ENCODE measurements at regions of chr5 and their contacts with region 1.

Region 1: DNA sequence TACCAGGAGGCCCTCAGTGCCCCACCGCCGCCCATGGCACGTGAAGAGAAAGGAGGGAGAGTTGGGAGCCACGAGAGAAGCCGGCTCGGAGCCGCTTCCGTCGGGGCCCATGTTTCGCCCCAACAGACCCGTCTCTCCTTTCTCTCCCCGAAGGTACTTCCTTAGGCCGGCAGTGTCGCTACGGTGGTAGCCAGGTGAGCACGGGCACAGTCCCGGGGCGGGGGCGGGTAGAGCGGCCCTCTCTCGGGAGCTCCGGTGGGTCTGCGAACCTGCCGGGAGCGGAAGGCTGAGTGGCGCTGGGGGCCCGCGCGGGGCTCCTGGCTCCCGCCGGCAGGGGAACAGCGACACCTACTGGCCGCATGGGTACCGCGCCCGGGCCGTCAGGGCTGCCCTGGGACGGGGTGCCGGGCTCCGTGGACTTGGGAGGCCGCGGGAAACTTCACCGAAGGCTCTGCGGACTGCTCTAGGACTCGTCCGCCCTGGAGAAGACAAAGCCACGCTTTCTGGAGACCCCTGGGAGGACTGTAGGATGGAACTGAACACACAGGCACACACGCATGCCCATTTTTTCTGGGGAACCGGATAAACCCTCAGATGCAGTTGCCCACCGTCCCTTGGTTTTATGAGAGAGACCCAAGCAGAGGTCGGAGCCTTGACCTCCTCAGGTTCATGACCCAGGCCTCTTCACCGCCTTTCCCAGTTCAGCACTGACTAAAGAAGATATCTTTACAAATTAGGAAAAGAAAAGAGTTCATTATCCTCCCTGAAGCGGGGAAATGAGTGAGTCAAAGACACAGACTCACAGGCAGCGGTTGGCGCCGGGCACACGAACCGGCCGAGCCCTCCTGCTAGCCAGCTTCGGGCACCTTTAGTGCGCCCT is 202.5 kb downstream of the MEF2C start:
- H3K4me3 Mint-ChIP-seq: peak overlapping the region; percentile 67
- H3K27ac Mint-ChIP-seq: no peak overlapping the region
- H3K4me1 Mint-ChIP-seq: peaks cover 52% of the 10 kb centered on the region
- H3K27me3 Mint-ChIP-seq: peaks cover 88% of the 10 kb centered on the region

Region 2: DNA sequence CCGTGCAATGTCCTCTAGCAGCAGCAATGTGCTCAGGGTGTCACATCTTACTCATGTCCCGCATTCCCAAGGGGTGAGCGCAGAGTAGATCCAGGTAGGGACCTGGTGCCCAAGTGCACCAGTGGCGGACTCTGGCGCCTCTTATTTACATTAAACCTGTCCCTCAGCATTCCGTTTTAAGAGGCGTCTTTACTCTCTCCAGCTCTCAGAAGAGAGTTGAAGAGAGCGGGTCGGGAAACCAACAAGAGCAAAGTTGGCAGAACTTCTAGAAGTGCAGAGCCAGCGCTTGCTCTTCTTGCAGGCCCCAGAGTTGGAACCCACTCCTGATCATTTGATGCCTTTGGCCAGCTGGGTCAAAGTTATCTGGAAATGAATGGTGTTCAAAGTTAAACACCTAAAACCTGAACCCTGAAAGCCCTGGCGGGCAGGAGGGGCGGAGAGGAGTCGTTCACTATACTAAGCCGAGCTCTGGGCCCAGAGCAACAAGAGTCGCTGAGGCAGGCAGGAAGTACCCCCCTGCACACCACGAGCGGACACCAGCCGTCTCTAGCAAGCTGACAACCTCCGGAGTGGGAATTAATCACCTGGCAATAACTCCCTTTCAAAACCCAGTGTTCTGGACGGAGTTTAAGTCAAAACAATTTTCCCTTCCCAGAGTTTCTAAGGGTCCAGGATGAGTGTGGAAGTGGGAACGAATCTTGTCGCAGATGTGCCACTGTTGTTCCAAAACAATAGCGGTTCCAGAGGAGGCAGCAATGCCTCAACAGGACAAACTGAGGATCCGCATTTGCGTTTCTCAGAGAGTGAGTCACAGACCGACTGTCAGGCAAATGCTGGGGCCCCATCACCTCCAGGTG is 534.7 kb before region 1 on chr5:
- intact Hi-C with region 1: loop called (anchors 5 kb)
- H3K4me3 Mint-ChIP-seq: no peak overlapping the region
- H3K27ac Mint-ChIP-seq: no peak overlapping the region
- H3K4me1 Mint-ChIP-seq: no peaks in the 10 kb centered on the region
- H3K27me3 Mint-ChIP-seq: peaks cover 25% of the 10 kb centered on the region

Region 3: DNA sequence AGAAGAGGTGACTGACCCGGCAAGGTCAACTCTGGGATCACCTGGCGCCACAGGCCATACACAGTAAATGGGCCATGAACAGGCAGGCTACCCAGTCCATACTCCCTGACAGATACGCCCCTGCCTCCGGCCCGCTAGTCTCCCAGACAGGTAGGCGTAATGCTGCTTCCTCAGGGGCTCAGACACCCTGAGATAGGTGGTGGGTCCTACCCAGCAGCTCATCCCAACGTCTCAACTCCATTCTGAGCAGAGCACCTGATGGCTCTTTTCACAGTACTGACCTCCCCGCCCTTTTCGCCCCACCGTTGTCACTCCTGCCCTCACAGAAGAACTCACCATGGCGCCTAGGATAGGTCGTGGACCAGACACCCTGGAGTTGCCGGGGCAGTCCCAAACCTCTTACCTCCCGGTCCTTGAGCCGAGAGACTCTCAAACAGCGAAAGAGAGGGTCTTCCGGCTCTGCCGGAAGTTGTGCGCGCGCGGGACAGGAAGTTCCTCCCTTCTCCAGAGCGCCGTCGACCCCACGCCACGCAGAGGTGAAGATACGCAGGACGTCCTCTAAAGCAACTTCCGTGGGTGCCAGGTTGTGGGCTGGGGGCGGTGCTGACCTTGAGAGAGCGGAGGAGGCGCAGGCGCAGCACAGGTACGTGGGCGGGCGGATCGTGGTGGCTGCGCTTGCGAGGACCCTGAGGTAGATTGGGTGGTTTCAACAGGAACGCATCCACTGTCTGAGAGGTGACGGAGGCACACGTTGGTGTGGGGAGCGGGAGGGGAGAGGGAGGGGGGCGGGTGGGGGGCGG is 411.9 kb before region 1 on chr5 and contains the start of gene TMEM161B:
- intact Hi-C with region 1: loop called (anchors 10 kb)
- H3K4me3 Mint-ChIP-seq: peak within 1 kb of the TSS; percentile 95
- H3K27ac Mint-ChIP-seq: peak within 1 kb of the TSS; percentile 91
- H3K4me1 Mint-ChIP-seq: peaks cover 35% of the 10 kb centered on the region
- H3K27me3 Mint-ChIP-seq: no peaks in the 10 kb centered on the region

Region 4: DNA sequence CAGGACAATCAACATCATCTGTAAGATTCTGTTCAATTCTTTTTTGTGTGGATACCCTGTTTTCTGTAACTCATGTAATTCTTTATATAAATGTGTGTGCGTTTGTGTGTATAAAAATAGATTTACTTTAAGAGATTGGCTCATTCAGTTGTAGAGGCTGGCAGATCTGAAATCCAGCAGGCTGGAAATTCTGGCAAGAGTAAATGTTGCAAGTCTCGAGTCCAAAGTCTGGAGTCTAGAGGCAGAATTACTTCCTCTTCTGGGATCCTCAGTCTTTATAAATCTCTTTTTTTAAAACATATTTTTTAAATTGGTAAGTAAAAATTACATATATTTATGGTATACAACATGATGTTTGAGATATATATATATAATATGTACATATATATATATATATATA is 209.7 kb before region 1 on chr5:
- intact Hi-C with region 1: no loop called
- H3K4me3 Mint-ChIP-seq: no peak overlapping the region
- H3K27ac Mint-ChIP-seq: no peak overlapping the region
- H3K4me1 Mint-ChIP-seq: no peaks in the 10 kb centered on the region
- H3K27me3 Mint-ChIP-seq: no peaks in the 10 kb centered on the region

Region 5: DNA sequence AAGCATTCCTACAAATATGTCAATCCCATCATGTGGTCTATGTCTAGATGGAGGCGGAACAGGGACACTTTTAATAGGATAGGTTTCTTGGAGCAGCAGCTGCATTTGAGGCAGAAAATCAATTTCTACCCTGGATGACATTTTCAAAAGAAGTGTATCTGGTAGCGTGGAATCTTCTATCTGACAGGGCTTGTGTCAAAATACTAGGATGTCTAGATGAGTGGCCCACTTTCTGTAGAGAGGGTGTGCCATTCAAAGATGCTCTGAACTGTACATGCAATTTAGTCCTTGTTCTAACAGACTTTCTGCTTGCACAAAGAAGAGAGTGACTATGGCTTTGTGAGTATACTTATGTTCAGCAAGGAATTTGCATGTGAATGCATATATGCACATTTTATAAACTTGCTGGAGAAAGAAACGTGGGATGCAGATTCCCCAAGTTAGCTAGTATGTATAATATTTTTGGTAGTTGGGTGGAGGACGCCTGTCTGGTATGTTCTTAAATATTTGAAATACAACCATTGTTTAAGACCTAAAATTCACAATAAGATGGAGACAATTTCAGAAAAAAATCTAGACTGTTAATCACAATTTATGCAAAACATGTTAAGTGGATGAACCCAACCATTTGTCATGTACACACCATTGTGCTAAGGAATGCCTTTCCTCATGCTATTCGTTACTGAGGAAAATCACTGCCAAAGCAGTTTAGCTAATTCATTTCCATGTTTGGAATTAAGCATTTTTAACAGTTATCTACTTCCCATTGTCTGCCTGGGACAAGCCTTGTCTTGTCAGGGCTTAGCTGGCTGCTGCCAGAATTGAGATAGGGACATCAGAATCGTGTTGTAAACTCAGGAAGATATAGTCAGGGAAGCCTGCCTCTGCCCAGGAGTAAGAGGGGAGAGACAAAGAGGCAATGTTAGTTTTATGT is 331.6 kb after region 1 on chr5:
- intact Hi-C with region 1: no loop called
- H3K4me3 Mint-ChIP-seq: no peak overlapping the region
- H3K27ac Mint-ChIP-seq: no peak overlapping the region
- H3K4me1 Mint-ChIP-seq: no peaks in the 10 kb centered on the region
- H3K27me3 Mint-ChIP-seq: no peaks in the 10 kb centered on the region